Right lobe of liver (tissue), 6 donors: ENCODE measurements at regions of chr12 and their contacts with region 1.

Region 1: GRCh38 chr12:11581179-11581755 is 68.2 kb upstream of the ETV6 start:
- DNase-seq: peak in 1 of 3 donors; percentile 58
- ATAC-seq: peak in 3 of 4 donors; percentile 59 to 69 (median 67)
- H3K4me3 ChIP-seq: no peak overlapping the region
- H3K27ac ChIP-seq: no peak overlapping the region
- H3K4me1 ChIP-seq: no peaks in the 10 kb centered on the region
- H3K27me3 ChIP-seq: no peaks in the 10 kb centered on the region
- CTCF ChIP-seq: peak; percentile 57 to 76 (median 68)
- POLR2A ChIP-seq: no peak

Region 2: DNA sequence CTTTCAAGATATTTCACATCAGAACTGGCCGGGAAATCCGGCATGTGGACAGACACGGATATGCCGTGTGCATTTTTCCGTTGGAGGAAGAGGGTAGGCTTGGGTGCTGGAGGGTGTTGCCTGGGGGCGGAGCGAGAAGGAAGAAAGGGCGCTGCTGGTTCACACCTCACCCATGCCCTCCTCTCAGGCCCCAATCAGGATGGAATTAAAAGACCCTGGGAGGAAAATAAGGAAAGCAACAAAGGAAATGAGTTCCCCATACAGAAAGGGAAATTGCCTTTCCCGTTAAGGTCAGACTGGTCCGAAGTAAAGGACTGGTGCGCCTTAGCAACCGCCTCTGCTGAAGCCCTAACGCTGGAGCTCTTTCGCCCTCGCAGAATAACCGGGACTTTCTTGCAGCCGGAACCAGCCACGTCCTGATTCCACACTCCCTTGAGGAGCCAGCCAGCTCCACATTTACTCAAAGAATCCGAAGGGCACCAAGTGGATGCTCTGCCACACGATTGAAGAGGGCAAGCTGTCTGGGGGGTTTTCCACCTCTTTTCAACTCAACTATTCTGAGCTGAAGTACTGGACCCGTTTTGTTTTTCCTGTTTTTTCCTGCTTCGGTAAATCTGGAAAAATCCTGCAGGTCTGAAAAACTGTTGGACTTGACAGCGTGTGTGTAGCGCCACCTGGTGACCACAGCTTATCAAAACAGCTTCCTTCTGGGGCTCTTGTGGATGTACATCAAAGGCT is 451.8 kb after region 1 on chr12:
- intact Hi-C with region 1: loop called (anchors 5 to 10 kb)
- DNase-seq: peak; percentile 72 to 78 (median 73)
- ATAC-seq: peak; percentile 87 to 92 (median 90)
- H3K4me3 ChIP-seq: peak overlapping the region; percentile 15 to 54 (median 30)
- H3K27ac ChIP-seq: peak overlapping the region in 2 of 3 donors; percentile 24 to 65
- H3K4me1 ChIP-seq: peaks cover 0 to 6% (median 0%) of the 10 kb centered on the region in 4 donors
- H3K27me3 ChIP-seq: no peaks in the 10 kb centered on the region
- CTCF ChIP-seq: peak; percentile 82 to 96 (median 84)
- POLR2A ChIP-seq: no peak

Region 3: DNA sequence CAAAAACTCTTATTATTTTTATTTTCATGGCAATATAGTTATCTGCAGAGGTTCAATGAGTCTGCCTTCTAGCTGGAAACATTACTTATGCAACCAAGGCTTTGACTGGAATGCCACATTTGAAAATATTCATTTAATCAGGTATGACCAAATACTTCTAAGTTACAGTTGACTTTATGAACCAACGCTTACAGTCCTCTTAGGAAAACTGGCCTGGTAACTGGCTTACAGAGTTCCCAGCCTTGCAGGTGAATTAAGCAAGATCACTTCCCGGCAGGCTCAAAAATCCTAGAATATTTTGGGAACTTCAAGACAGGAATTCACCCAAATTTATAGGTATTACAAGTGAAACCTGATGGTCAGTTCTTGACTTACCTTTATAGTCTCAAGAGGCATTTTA is 673.3 kb after region 1 on chr12:
- intact Hi-C with region 1: no loop called
- DNase-seq: no peak
- ATAC-seq: peak in 1 of 4 donors; percentile 29
- H3K4me3 ChIP-seq: no peak overlapping the region
- H3K27ac ChIP-seq: no peak overlapping the region
- H3K4me1 ChIP-seq: peaks cover 0 to 22% (median 11%) of the 10 kb centered on the region in 4 donors
- H3K27me3 ChIP-seq: no peaks in the 10 kb centered on the region
- CTCF ChIP-seq: no peak
- POLR2A ChIP-seq: no peak